Activated naive CD8-positive, alpha-beta T cell treated with anti-CD3 and anti-CD28 coated beads, Interleukin-2, amount 10 ng/mL, durations not matched to agents 7 days and 5 days (primary cell): ENCODE measurements at regions of chr20 and their contacts with region 1.

Region 1: DNA sequence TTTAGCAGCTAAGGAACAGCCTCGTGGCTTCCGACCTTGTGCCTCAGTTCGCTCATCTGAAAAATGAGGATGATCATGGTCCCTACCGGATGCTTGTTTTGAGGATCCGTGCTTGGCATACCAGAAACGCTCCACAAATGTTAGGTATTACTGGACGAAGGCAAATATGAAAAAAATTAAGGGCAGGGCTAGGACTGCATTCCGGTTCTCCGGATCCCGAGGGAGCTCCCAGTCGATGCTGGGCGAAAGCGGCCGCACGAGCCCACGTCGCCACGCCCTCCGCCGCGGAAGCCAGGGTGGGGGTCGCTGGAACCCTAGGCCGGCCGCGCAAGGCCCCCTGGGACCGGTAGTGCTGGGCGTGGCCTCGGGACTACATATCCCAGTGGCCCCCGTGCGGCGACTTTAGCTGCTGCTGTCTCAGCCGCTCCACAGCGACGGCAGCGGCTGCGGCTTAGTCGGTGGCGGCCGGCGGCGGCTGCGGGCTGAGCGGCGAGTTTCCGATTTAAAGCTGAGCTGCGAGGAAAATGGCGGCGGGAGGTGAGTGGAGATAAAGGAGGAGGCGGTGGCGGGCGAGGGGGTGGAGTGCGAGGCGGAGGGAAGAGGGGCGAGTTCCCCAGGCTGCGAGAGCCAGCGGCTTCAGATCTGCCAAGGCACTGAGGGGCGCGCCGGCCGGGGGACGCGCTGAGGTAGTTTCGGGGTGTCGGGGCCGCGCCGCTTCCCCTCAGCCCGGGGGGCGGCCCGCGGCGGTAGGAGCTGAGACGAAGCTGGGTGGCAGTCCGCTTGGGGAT is at the start of gene NCOA3:
- DNase-seq: peak; percentile 97
- ATAC-seq: peak; percentile 87
- H3K4me3 Mint-ChIP-seq: peak within 1 kb of the TSS; percentile 99
- H3K27ac Mint-ChIP-seq: peak within 1 kb of the TSS; percentile 99
- H3K4me1 Mint-ChIP-seq: peaks cover 32% of the 10 kb centered on the region
- H3K27me3 Mint-ChIP-seq: no peaks in the 10 kb centered on the region
- total RNA-seq, gene NCOA3: 71.3 to 74.2 TPM

Region 2: GRCh38 chr20:47411161-47411560 is 90.5 kb before region 1 on chr20:
- POLR2A ChIA-PET with region 1: interaction called, 12 read pairs
- DNase-seq: no peak
- ATAC-seq: no peak
- H3K4me3 Mint-ChIP-seq: no peak overlapping the region
- H3K27ac Mint-ChIP-seq: no peak overlapping the region
- H3K4me1 Mint-ChIP-seq: peaks cover 26% of the 10 kb centered on the region
- H3K27me3 Mint-ChIP-seq: no peaks in the 10 kb centered on the region

Region 3: DNA sequence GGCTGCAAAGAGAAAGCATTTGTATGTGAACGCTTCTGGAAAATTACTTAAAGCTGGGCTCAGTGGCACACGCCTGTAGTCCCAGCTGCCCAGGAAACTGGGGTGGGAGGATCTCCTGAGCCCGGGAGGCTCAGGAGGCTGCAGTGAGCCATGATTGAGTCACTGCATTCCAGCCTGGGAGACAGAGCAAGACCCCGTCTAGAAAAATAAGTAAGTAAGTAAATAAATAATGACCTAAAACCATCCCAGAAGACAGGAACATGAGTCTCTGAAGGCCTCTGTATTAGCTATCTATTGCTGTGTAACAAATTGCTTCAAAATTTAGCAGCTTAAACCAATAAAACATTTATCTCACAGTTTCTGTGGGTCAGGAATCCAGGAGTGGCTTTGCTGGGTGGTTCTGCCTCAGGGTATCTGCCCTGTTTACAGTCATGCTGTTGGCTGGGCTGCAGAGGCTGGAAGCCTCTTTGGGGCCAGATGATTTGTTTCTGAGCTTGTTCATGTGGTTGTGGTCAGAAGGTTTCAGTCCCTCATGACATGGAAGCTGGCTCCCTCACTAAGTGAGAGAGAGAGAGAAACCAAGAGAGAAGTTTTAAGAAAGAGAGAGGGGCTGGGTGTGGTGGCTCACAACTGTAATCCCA is 48.4 kb before region 1 on chr20:
- POLR2A ChIA-PET with region 1: interaction called, 12 read pairs
- DNase-seq: peak; percentile 47
- ATAC-seq: peak; percentile 96
- H3K4me3 Mint-ChIP-seq: peak overlapping the region; percentile 66
- H3K27ac Mint-ChIP-seq: peak overlapping the region; percentile 89
- H3K4me1 Mint-ChIP-seq: peaks cover 30% of the 10 kb centered on the region
- H3K27me3 Mint-ChIP-seq: no peaks in the 10 kb centered on the region

Region 4: GRCh38 chr20:47610247-47610944 is 108.7 kb after region 1 on chr20:
- POLR2A ChIA-PET with region 1: interaction called, 21 read pairs
- DNase-seq: no peak
- ATAC-seq: peak; percentile 88
- H3K4me3 Mint-ChIP-seq: peak overlapping the region; percentile 78
- H3K27ac Mint-ChIP-seq: peak overlapping the region; percentile 87
- H3K4me1 Mint-ChIP-seq: peaks cover 63% of the 10 kb centered on the region
- H3K27me3 Mint-ChIP-seq: no peaks in the 10 kb centered on the region